ENCODE measurements at regions of chr1 and their contacts with region 1.

Region 1: GRCh38 chr1:229730573-229730972 is 104.5 kb downstream of the URB2 start:
- DNase-seq: no peak
- H3K4me3 ChIP-seq: no peak overlapping the region
- CTCF ChIP-seq: no peak
- POLR2A ChIP-seq: no peak

Region 2: GRCh38 chr1:229879746-229880145 is 149.2 kb after region 1 on chr1:
- intact Hi-C with region 1: no loop called
- DNase-seq: peak in 1 of 2 donors; percentile 23
- H3K4me3 ChIP-seq: no peak overlapping the region
- CTCF ChIP-seq: no peak
- POLR2A ChIP-seq: no peak

Region 3: DNA sequence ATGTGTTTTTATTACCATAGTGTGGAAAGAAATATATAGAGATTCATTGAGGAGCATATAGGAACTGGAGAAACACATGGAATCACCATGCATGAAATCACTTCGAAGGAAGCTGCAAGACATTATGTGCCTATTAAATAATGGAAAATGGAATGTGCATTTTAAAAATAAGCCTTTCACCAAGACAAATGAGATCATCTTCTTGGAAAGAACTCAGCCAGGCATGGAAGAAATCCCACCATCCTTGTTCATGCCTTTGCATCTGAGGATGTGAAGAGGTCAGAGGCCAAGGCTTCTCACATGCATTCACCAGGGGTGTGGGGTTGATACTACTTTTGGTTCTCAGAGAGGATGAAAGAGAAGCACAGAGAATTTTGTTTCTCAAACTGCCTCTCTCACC is 1087.8 kb after region 1 on chr1:
- intact Hi-C with region 1: loop called (anchors 10 kb)
- DNase-seq: no peak
- H3K4me3 ChIP-seq: no peak overlapping the region
- CTCF ChIP-seq: no peak
- POLR2A ChIP-seq: no peak

Region 4: GRCh38 chr1:231724876-231725724 is 1994.5 kb after region 1 on chr1:
- intact Hi-C with region 1: no loop called
- DNase-seq: no peak
- H3K4me3 ChIP-seq: no peak overlapping the region
- CTCF ChIP-seq: no peak
- POLR2A ChIP-seq: no peak